Activated CD4-positive, alpha-beta memory T cell treated with anti-CD3 and anti-CD28 coated beads for 36 hours (primary cell): ENCODE measurements at regions of chr14 and their contacts with region 1.

Region 1: GRCh38 chr14:51269634-51270033 is 29.6 kb downstream of the TMX1 start:
- DNase-seq: no peak
- H3K4me3 Mint-ChIP-seq: no peak overlapping the region
- H3K27ac Mint-ChIP-seq: no peak overlapping the region
- H3K4me1 Mint-ChIP-seq: no peaks in the 10 kb centered on the region
- H3K27me3 Mint-ChIP-seq: no peaks in the 10 kb centered on the region

Region 2: DNA sequence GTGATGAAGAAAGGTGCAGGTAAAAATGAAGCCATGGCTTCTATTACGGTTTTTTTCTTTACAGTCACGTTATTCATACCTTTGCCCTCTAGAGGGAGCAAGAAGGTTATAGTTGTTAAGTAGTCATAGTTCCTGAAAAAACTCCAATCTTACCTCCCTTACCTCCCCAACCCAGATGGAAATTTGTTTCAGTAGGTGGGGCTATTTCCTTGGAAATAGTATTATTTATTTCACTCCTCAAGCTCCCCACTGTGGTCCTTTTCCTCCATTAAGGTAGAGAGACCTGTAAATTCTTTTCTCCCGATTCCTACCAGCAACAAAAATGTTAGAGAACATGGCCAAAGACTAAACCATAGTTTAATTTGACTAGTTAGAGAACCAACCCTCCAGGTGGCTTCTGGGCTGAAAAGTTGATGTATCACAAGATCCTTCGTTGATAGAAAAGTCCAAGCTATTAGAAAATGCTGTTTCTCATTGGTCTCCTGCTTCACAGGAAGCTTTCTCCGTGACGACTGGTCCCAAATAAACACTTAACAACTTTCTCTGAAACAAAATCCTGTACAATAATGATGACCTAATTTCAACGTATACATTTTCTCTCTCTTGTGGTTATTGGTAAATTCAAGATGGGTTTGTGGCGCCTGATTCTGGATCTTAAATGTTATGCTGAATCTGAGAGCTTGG is 13.9 kb after region 1 on chr14:
- CTCF ChIA-PET with region 1: interaction called, 19 read pairs
- POLR2A ChIA-PET with region 1: no interaction called
- intact Hi-C with region 1: no loop called
- DNase-seq: no peak
- H3K4me3 Mint-ChIP-seq: no peak overlapping the region
- H3K27ac Mint-ChIP-seq: no peak overlapping the region
- H3K4me1 Mint-ChIP-seq: no peaks in the 10 kb centered on the region
- H3K27me3 Mint-ChIP-seq: no peaks in the 10 kb centered on the region

Region 3: GRCh38 chr14:51342241-51342691 is 72.6 kb after region 1 on chr14:
- CTCF ChIA-PET with region 1: no interaction called
- POLR2A ChIA-PET with region 1: no interaction called
- intact Hi-C with region 1: no loop called
- DNase-seq: no peak
- H3K4me3 Mint-ChIP-seq: no peak overlapping the region
- H3K27ac Mint-ChIP-seq: no peak overlapping the region
- H3K4me1 Mint-ChIP-seq: no peaks in the 10 kb centered on the region
- H3K27me3 Mint-ChIP-seq: no peaks in the 10 kb centered on the region